A549 (cell line): ENCODE measurements at regions of chr19 and their contacts with region 1.

Region 1: GRCh38 chr19:40813182-40813958 is 14.4 kb downstream of the EGLN2 start:
- DNase-seq: no peak
- ATAC-seq: no peak
- H3K4me3 ChIP-seq: no peak overlapping the region
- H3K27ac ChIP-seq: peak overlapping the region; percentile 12 to 35; a peak in 2 of 6 replicates
- H3K4me1 ChIP-seq: peaks cover 11% of the 10 kb centered on the region; the same call in 2 of the 3 replicates
- CTCF ChIP-seq: no peak
- EP300 ChIP-seq: no peak
- POLR2A ChIP-seq: no peak
- RAD21 ChIP-seq: no peak

Region 2: GRCh38 chr19:40744554-40745401 is 68.6 kb before region 1 on chr19:
- CTCF ChIA-PET with region 1: interaction called, 12 read pairs
- POLR2A ChIA-PET with region 1: no interaction called
- DNase-seq: no peak
- ATAC-seq: peak; percentile 7 to 46; a peak in 4 of 6 replicates
- H3K4me3 ChIP-seq: no peak overlapping the region
- H3K27ac ChIP-seq: peak overlapping the region in 1 of 2 experiments; percentile 64; a peak in 3 of 6 replicates
- H3K4me1 ChIP-seq: peaks cover 28% of the 10 kb centered on the region
- CTCF ChIP-seq: peak; percentile 24; the same call in 1 of the 3 replicates
- EP300 ChIP-seq: no peak
- POLR2A ChIP-seq: no peak
- RAD21 ChIP-seq: peak; percentile 34; a peak in 4 of 5 replicates

Region 3: GRCh38 chr19:40827386-40828247 is 14.2 kb after region 1 on chr19:
- CTCF ChIA-PET with region 1: interaction called, 146 read pairs
- POLR2A ChIA-PET with region 1: no interaction called
- DNase-seq: no peak
- ATAC-seq: no peak
- H3K4me3 ChIP-seq: no peak overlapping the region
- H3K27ac ChIP-seq: no peak overlapping the region
- H3K4me1 ChIP-seq: peaks cover 18% of the 10 kb centered on the region
- CTCF ChIP-seq: no peak
- EP300 ChIP-seq: 0 out of 5 replicates have a peak, but pooled peaks of 1 of the 2 experiments have one; percentile 6
- POLR2A ChIP-seq: no peak; the same call in 1 of the 2 replicates
- RAD21 ChIP-seq: no peak